SK-N-SH (cell line): ENCODE measurements at regions of chr7 and their contacts with region 1.

Region 1: GRCh38 chr7:2353936-2354185 is 766 bp upstream of the EIF3B start:
- DNase-seq: peak; percentile 99
- H3K4me3 ChIP-seq: peak overlapping the region; percentile 76 to 84
- H3K27ac ChIP-seq: peak overlapping the region; percentile 97 to 98
- H3K4me1 ChIP-seq: peaks cover 7 to 18% of the 10 kb centered on the region in 2 experiments
- H3K27me3 ChIP-seq: no peaks in the 10 kb centered on the region
- CTCF ChIP-seq: no peak
- EP300 ChIP-seq: no peak
- RAD21 ChIP-seq: no peak

Region 2: DNA sequence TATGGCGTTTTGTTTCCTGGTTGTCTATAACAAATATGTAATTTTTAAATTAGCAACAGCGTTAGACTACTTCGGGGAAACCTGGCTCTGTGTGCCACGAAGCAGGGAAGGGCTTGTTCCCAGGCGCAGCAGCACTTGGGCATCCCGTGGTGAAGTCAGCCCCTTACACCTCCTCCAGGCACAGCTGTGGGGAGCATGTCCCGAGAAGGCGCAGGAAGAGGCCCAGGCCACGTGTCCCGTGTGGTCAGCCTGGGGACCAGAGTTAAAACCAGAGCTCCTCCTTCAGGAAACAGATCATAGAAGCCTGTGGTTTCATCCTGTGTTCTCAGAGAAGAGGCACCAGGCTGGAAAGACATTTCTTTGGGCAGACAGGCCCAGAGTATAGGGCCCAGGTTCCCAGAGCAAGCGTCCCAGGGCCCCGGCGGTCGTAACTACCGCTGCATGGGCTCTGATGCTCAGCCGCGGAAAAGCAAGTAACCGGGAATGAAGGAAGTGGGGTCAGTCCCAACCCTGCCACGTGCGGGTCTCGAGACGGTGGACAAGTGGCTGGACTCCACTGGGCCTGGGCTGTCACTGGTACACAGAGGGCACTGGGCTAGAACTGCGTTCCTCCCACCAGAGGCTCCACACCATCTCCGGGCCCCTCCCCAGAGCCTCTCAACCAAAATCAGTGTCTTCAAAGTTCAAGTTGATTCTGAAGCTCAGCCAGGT is 104.7 kb before region 1 on chr7:
- CTCF ChIA-PET with region 1: interaction called, 23 read pairs
- POLR2A ChIA-PET with region 1: interaction called, 3 read pairs
- DNase-seq: peak; percentile 61
- H3K4me3 ChIP-seq: peak overlapping the region in 1 of 2 experiments; percentile 20; a peak in 2 of 4 replicates
- H3K27ac ChIP-seq: peak overlapping the region; percentile 73 to 98
- H3K4me1 ChIP-seq: peaks cover 5 to 16% of the 10 kb centered on the region in 2 experiments; a peak in 3 of 4 replicates
- H3K27me3 ChIP-seq: no peaks in the 10 kb centered on the region
- CTCF ChIP-seq: peak; percentile 40
- EP300 ChIP-seq: no peak
- RAD21 ChIP-seq: peak; percentile 23; the same call in 1 of the 2 replicates

Region 3: DNA sequence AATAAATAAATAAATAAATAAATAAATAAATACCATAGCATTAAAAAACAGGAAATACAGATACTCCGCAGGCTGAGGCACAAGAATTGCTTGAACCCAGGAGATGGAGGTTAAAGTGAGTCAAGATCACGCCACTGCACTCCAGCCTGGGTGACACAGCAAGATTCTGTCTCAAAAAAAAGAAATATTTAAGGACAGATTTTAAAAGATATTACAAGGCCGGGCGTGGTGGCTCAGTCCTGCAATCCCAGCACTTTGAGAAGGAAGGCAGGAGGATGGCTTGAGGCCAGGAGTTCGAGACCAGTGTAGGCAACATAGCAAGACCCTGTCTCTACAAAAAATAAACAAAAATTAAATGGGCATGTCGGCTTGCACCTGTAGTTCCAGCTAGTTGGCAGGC is 22.2 kb before region 1 on chr7:
- CTCF ChIA-PET with region 1: interaction called, 10 read pairs
- POLR2A ChIA-PET with region 1: interaction called, 6 read pairs
- DNase-seq: no peak
- H3K4me3 ChIP-seq: no peak overlapping the region
- H3K27ac ChIP-seq: no peak overlapping the region
- H3K4me1 ChIP-seq: no peaks in the 10 kb centered on the region
- H3K27me3 ChIP-seq: no peaks in the 10 kb centered on the region
- CTCF ChIP-seq: no peak
- EP300 ChIP-seq: no peak
- RAD21 ChIP-seq: no peak